PC-3 (cell line): ENCODE measurements at regions of chr15 and their contacts with region 1.

Region 1: DNA sequence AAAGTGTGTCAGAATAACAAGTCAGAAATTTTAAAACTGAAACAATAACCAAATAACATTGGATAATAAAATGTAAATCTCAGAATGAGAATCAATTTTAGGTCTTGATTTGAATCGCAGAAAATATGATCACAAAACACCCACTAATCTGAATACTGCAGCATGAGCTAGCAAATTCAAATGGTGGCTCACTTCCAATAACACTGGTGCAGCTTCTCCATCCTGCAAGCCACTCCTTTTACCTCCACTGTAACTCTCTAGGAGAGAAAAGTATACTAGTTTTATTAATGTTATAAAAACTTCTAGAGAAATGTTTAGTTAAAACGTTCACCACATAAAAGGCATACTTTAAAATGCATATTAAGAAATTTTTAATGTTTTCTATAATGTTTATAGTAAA is 30.4 kb downstream of the UBE3A start:
- DNase-seq: no peak
- ATAC-seq: peak; percentile 31; the same call in 1 of the 2 replicates
- H3K4me3 ChIP-seq: no peak overlapping the region
- H3K27ac ChIP-seq: no peak overlapping the region
- H3K4me1 ChIP-seq: no peaks in the 10 kb centered on the region
- H3K27me3 ChIP-seq: no peaks in the 10 kb centered on the region
- CTCF ChIP-seq: no peak

Region 2: DNA sequence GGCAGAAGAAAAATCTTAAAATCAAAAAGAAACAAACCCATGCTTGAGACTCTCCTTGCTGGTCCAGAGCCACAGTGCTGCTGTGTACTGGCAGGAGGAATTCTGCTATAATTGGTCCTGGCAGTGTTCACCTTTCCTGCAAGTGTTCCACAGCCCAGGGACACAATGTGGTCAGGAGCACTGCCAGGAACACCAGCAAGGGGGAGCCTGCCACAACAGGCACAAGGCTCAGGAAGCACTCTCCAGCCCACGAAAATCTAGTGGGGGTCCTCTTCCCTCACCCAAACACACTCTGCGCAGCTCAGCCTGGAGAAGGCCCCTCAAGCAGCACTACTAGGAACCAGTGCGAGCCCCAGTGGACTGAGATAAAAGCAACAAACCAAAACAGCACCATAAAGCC is 62.5 kb before region 1 on chr15:
- CTCF ChIA-PET with region 1: no interaction called
- POLR2A ChIA-PET with region 1: no interaction called
- intact Hi-C with region 1: no loop called
- DNase-seq: no peak
- ATAC-seq: peak; percentile 78
- H3K4me3 ChIP-seq: no peak overlapping the region
- H3K27ac ChIP-seq: no peak overlapping the region
- H3K4me1 ChIP-seq: no peaks in the 10 kb centered on the region
- H3K27me3 ChIP-seq: no peaks in the 10 kb centered on the region
- CTCF ChIP-seq: peak; percentile 44

Region 3: DNA sequence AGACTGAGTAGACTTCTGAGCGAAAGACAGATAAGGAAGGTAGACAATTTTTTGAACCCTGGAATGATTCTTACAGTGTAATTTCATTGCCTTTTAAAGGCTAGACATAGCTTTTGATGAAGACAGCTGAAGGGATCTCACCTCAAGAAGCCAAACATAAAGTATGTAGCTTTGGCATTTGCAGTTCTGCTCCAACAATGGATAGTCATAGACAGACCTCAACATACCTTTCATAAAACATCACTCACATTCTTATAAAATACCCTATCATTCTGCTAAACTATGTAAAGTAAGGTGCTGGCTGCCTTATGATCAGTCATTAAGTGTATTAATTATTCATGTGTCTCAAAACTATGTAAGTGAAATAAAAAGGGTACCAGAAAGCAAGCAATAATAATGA is 39.6 kb before region 1 on chr15:
- CTCF ChIA-PET with region 1: no interaction called
- POLR2A ChIA-PET with region 1: no interaction called
- intact Hi-C with region 1: loop called (anchors 5 kb)
- DNase-seq: no peak
- ATAC-seq: no peak
- H3K4me3 ChIP-seq: no peak overlapping the region
- H3K27ac ChIP-seq: no peak overlapping the region
- H3K4me1 ChIP-seq: peaks cover 12% of the 10 kb centered on the region
- H3K27me3 ChIP-seq: no peaks in the 10 kb centered on the region
- CTCF ChIP-seq: no peak